Heart left ventricle (tissue), 16 donors: ENCODE measurements at regions of chr5 and their contacts with region 1.

Region 1: DNA sequence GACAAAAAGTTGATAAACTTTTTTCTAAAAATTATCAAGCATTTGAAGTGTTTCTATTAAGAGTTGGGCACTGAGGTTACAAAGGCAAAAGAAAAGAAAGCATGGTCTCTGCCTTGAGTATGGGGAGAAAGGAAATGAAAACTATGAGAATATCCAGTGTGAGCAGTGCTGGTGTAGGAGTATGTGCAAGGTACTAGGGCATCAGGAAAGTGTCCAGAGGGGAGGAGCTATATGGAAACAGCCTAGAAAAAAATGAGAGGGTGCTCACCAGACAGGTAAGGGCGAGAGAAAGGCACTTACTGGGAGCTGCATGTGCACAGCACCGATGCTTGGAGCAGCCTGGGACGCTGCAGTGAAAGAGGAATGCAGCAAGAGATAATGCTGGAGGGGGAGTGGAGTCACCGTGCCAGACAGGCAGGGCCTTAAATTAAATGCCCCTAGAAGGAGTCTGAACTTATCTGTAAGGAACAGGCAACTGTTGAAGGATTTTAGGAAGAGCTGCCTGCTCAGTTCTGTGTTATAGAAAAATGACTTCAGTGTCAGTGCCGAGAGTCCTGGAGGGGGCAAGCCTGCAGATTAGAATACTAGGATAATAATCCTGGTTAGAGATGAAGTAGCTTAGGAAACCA is 14.0 kb downstream of the MCC start:
- DNase-seq: no peak
- ATAC-seq: peak in 3 of 4 donors; percentile 33 to 54 (median 52)
- H3K4me3 ChIP-seq: no peak overlapping the region
- H3K27ac ChIP-seq: no peak overlapping the region
- H3K4me1 ChIP-seq: peaks cover 0 to 5% (median 0%) of the 10 kb centered on the region in 12 donors
- H3K27me3 ChIP-seq: peaks cover 0 to 4% (median 0%) of the 10 kb centered on the region in 9 donors
- CTCF ChIP-seq: no peak
- POLR2A ChIP-seq: no peak

Region 2: GRCh38 chr5:113493446-113493845 is 19.2 kb after region 1 on chr5:
- intact Hi-C with region 1: loop called in 1 of 10 experiments (anchors 2 kb)
- DNase-seq: no peak
- ATAC-seq: no peak
- H3K4me3 ChIP-seq: no peak overlapping the region
- H3K27ac ChIP-seq: no peak overlapping the region
- H3K4me1 ChIP-seq: peaks cover 0 to 16% (median 2%) of the 10 kb centered on the region in 12 donors
- H3K27me3 ChIP-seq: peaks cover 0 to 53% (median 0%) of the 10 kb centered on the region in 9 donors
- CTCF ChIP-seq: no peak
- POLR2A ChIP-seq: no peak

Region 3: GRCh38 chr5:113513384-113514288 is 39.4 kb after region 1 on chr5 and contains the start of gene YTHDC2:
- intact Hi-C with region 1: no loop called
- DNase-seq: peak; percentile 88 to 95 (median 91)
- ATAC-seq: peak; percentile 95 to 98 (median 98)
- H3K4me3 ChIP-seq: peak within 1 kb of the TSS; percentile 77 to 96 (median 82)
- H3K27ac ChIP-seq: peak within 1 kb of the TSS; percentile 70 to 97 (median 92)
- H3K4me1 ChIP-seq: peaks cover 0 to 37% (median 16%) of the 10 kb centered on the region in 12 donors
- H3K27me3 ChIP-seq: peaks cover 0 to 13% (median 0%) of the 10 kb centered on the region in 9 donors
- CTCF ChIP-seq: peak in 10 of 12 donors; percentile 8 to 58 (median 32)
- POLR2A ChIP-seq: peak in 1 of 2 donors; percentile 73
- total RNA-seq, gene YTHDC2: 9.4 to 19.8 (median 15.1) TPM

Region 4: DNA sequence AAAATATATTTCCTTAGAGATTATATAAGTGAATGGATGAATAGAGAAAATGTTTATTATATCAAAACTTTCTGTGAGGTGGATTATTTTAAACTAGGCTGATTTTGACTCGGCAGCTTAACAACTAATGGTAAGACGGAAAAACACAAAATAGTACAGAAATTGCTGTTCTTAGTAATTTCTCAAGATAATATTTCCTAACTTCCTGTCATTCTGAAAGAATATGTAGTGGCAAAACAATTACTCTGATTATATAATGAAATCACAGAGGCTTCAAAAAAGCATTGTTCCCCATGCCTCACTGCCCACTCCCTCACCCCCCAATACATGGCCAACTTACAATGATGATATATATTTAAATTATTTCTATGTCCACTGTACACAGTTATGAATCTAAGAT is 124.7 kb after region 1 on chr5:
- intact Hi-C with region 1: no loop called
- DNase-seq: no peak
- ATAC-seq: no peak
- H3K4me3 ChIP-seq: no peak overlapping the region
- H3K27ac ChIP-seq: no peak overlapping the region
- H3K4me1 ChIP-seq: peaks cover 0 to 16% (median 0%) of the 10 kb centered on the region in 12 donors
- H3K27me3 ChIP-seq: no peaks in the 10 kb centered on the region
- CTCF ChIP-seq: no peak
- POLR2A ChIP-seq: no peak